ENCODE measurements at regions of chr10 and their contacts with region 1.

Region 1: DNA sequence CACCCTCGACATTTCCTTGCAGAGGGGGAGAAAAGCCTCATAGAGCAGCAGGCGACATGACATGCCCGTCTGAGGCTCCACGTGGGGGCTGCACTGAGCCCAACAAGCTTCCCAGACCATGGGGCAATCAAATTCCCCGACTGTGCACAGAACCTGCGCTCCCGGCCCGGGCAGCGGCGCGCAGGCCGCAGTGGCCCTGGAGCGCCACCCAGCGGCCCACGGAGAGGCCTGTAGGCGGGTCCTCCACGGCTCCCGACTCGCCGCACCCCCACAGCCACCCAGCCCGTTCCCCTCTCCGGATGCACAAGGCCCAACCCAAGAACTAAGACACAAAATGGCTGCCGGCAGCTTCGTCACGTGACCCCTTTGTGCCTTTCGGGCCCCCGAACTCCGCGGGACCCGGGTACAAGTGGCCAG is 816 bp downstream of the EPC1 start:
- DNase-seq: peak in 1 of 2 experiments; percentile 91
- H3K4me3 ChIP-seq: peak overlapping the region; percentile 80 to 98 (median 95)
- H3K27ac ChIP-seq: peak overlapping the region; percentile 100
- H3K4me1 ChIP-seq: peaks cover 0 to 5% (median 2%) of the 10 kb centered on the region in 4 experiments; a peak in 3 of 7 replicates
- H3K27me3 ChIP-seq: no peaks in the 10 kb centered on the region
- CTCF ChIP-seq: peak; percentile 81 to 93 (median 89)
- EP300 ChIP-seq: peak; percentile 26 to 57; a peak in 2 of 3 replicates
- POLR2A ChIP-seq: peak in 1 of 2 experiments; percentile 24; a peak in 2 of 3 replicates
- RAD21 ChIP-seq: peak; percentile 88 to 91

Region 2: DNA sequence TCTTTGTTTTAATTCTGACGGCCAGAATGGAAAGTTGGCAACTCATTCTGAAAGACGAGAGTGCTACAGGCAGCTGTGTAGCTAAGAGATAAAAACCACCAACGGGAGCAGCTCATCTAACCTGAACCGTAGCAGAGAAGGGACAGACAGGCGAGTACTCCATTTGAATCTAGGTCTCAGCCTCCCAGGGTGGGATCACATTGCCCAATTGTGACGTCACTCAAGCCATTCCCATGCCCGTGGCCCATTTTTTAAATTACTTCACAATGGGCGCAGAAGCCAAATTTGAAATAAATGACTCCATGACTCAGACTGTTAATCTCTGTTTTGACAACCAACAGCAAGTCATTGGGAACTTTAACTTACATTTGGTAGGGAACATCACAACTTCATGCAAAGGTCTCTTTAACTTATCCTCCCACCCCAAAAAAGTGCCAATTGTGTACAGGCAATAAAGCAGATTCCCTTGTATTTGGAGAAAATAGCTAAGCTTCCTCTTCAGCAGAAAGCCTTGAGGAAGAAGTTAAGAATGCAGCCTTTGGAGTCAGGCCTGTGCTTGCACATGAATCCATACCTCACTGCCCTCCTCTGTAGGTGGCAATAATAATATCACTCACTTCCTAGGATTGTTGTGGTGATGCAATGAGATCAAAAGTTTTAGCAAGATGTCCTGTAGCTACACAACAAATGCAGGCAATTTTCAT is 196.7 kb before region 1 on chr10:
- CTCF ChIA-PET with region 1: no interaction called
- POLR2A ChIA-PET with region 1: no interaction called
- DNase-seq: no peak
- H3K4me3 ChIP-seq: no peak overlapping the region
- H3K27ac ChIP-seq: no peak overlapping the region
- H3K4me1 ChIP-seq: no peaks in the 10 kb centered on the region
- H3K27me3 ChIP-seq: no peaks in the 10 kb centered on the region
- CTCF ChIP-seq: no peak
- EP300 ChIP-seq: no peak
- POLR2A ChIP-seq: no peak
- RAD21 ChIP-seq: no peak

Region 3: DNA sequence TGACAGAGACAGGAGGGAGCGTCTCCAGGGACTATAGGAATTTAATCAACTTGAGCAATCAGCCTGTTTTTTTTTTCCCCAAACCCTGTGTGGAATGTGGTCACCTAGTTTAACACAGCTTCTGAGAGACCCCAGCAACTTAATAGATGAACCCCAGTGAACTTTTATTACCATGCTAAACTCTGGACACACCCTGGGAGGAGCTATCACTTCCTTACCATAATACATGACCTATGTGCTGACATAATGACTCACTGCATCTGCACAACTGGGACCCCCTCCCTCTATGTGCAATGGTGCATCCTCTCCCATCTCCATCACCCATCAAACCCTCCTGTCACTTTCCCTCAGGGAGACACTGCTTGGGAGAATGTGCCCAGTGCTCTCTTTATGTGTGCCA is 82.8 kb before region 1 on chr10:
- CTCF ChIA-PET with region 1: interaction called, 5 read pairs
- POLR2A ChIA-PET with region 1: interaction called, 13 read pairs
- DNase-seq: no peak
- H3K4me3 ChIP-seq: no peak overlapping the region
- H3K27ac ChIP-seq: no peak overlapping the region
- H3K4me1 ChIP-seq: peaks cover 0 to 14% (median 3%) of the 10 kb centered on the region in 4 experiments; a peak in 6 of 7 replicates
- H3K27me3 ChIP-seq: no peaks in the 10 kb centered on the region
- CTCF ChIP-seq: no peak
- EP300 ChIP-seq: no peak
- POLR2A ChIP-seq: no peak
- RAD21 ChIP-seq: no peak

Region 4: GRCh38 chr10:32332299-32332750 is 13.8 kb before region 1 on chr10:
- CTCF ChIA-PET with region 1: interaction called, 18 read pairs
- POLR2A ChIA-PET with region 1: interaction called, 10 read pairs
- DNase-seq: no peak
- H3K4me3 ChIP-seq: no peak overlapping the region
- H3K27ac ChIP-seq: no peak overlapping the region
- H3K4me1 ChIP-seq: peaks cover 0 to 16% (median 13%) of the 10 kb centered on the region in 4 experiments; a peak in 5 of 7 replicates
- H3K27me3 ChIP-seq: no peaks in the 10 kb centered on the region
- CTCF ChIP-seq: no peak
- EP300 ChIP-seq: no peak
- POLR2A ChIP-seq: no peak
- RAD21 ChIP-seq: no peak